ENCODE measurements at regions of chr14 and their contacts with region 1.

Region 1: GRCh38 chr14:51780006-51780692 is 80.3 kb upstream of the GNG2 start:
- DNase-seq: peak; percentile 65 to 87 (median 79)
- ATAC-seq: peak; percentile 59 to 74
- H3K4me3 ChIP-seq: no peak overlapping the region
- H3K27ac ChIP-seq: no peak overlapping the region
- H3K4me1 ChIP-seq: no peaks in the 10 kb centered on the region
- H3K27me3 ChIP-seq: no peaks in the 10 kb centered on the region

Region 2: DNA sequence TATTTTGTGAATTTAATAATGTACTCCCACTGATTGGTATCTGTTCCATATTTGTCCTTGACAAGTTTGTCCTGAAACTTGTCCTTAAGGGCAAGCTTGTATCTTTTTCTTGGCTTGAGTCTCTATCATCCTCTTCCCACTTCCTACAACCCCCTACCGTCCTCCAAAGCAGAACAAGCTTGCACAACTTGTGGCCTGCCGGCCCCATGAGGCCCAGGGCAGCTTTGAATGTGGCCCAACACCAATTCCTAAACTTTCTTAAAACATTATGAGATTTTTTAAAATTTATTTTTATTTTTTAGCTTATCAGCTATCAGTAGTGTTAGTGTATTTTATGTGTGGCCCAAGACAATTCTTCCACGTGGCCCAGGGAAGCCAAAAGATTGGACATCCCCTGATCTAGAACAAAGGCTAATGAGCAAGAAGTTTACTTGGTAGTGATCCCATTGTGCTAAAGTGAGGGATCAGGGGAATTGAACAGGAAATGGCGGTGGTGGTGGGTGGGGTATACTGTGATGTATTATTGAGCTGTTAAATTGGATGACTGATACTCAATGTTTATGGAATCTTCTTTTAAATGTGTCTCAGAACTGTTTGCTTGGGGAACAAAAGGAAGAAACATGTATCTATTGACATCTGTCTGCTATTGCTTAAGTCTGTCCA is 502.3 kb before region 1 on chr14:
- intact Hi-C with region 1: loop called in 3 of 4 experiments (anchors 10 kb)
- DNase-seq: peak in 1 of 3 donors; percentile 63
- ATAC-seq: peak in 1 of 2 donors; percentile 59
- H3K4me3 ChIP-seq: no peak overlapping the region
- H3K27ac ChIP-seq: no peak overlapping the region
- H3K4me1 ChIP-seq: peaks cover 1% of the 10 kb centered on the region
- H3K27me3 ChIP-seq: no peaks in the 10 kb centered on the region

Region 3: GRCh38 chr14:51283402-51284085 is 496.6 kb before region 1 on chr14:
- intact Hi-C with region 1: loop called (anchors 5 to 10 kb)
- DNase-seq: no peak
- ATAC-seq: peak; percentile 78 to 82
- H3K4me3 ChIP-seq: no peak overlapping the region
- H3K27ac ChIP-seq: no peak overlapping the region
- H3K4me1 ChIP-seq: no peaks in the 10 kb centered on the region
- H3K27me3 ChIP-seq: no peaks in the 10 kb centered on the region

Region 4: GRCh38 chr14:51554953-51555352 is 225.2 kb before region 1 on chr14:
- intact Hi-C with region 1: loop called in 1 of 4 experiments (anchors 10 kb)
- DNase-seq: no peak
- ATAC-seq: no peak
- H3K4me3 ChIP-seq: no peak overlapping the region
- H3K27ac ChIP-seq: no peak overlapping the region
- H3K4me1 ChIP-seq: no peaks in the 10 kb centered on the region
- H3K27me3 ChIP-seq: no peaks in the 10 kb centered on the region

Region 5: DNA sequence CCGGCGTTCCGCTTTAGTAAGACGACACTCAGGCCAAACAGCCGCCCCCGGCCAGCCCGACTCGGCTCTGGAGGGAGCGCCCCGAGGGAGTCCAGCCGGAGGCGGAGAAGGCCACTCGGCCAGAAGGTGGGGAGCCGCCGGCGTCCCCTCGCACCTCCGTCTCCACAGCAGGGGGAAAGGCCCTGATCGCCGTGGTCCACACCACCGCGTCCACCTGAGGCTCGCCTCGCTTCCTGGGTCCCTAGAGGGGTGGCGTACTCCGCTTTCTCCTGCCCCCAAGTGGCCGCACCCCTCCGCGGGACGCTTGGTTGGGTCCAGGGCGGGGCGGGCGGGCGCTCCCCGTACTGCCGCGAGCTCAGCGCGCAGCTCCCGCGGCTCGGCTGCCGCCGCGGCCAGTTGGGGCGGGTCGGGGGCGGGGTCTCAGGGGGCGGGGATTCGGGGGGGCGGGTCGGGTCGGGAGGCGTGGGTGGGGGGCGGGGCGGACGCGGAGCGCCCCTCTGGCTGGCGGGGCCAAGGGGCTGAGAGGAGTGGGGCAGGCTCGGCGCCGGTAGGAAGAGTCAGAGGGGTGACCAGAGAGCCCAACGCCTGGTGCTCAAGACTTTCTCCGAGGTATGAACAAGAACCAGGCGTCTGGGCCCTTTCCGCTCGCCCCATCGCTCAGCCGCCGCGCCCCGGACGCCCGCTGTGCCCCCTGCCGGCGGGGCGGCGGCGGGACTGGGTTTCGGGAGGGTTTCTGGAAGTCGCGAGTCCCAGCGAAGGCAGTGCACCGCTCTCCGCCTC is 128.6 kb before region 1 on chr14 and contains the start of gene FRMD6:
- intact Hi-C with region 1: loop called in 1 of 4 experiments (anchors 10 kb)
- DNase-seq: peak; percentile 91 to 96 (median 95)
- ATAC-seq: peak; percentile 96
- H3K4me3 ChIP-seq: peak within 1 kb of the TSS; percentile 76
- H3K27ac ChIP-seq: peak within 1 kb of the TSS; percentile 92
- H3K4me1 ChIP-seq: no peaks in the 10 kb centered on the region
- H3K27me3 ChIP-seq: no peaks in the 10 kb centered on the region
- total RNA-seq, gene FRMD6: 7.8 to 8.8 (median 8.1) TPM

Region 6: DNA sequence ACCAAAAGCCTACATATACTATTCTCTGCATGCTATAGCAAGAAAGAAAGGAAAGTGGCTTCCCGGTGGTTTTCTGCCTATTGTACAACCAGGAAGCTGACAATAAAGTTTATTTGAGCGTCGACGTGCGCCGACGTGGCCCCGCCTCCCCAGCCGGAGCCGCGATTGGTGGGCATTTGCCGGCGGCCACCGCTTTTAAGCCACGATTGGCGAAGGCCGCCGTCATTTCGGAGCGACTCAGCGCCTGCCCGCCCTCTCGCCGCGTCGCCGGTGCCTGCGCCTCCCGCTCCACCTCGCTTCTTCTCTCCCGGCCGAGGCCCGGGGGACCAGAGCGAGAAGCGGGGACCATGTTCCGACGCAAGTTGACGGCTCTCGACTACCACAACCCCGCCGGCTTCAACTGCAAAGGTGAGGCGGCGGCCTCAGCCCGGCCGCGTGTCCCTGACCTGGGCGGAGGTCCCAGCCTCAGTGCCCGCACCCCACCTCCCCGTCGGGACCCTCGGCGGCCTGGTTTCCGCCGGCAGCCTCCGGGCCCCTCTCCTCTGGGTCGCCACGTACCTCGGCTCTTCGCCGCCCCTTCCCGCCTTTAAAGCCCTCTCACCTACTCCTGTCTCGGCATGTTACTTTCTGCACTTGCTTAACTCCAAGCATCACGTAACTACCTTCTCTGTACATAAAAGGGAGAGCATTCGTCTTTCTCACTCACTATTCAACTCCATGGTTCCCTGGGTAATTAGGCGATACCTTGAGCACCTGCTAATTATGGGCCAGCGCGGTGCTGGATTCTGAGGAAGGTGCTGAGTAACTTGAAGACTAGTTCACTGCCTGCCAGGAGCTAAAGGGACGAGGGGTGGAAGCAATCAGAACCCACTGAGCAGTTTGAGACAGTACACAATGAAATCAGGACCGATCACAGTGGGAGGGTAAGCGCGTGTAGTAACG is 209.4 kb after region 1 on chr14 and contains the start of gene RTRAF:
- intact Hi-C with region 1: loop called in 2 of 4 experiments (anchors 10 kb)
- DNase-seq: peak; percentile 96 to 98 (median 97)
- ATAC-seq: peak; percentile 99 to 100
- H3K4me3 ChIP-seq: peak within 1 kb of the TSS; percentile 76
- H3K27ac ChIP-seq: peak within 1 kb of the TSS; percentile 53
- H3K4me1 ChIP-seq: no peaks in the 10 kb centered on the region
- H3K27me3 ChIP-seq: no peaks in the 10 kb centered on the region
- total RNA-seq, gene RTRAF: 160 to 217 (median 190) TPM